MCF 10A (cell line): ENCODE measurements at regions of chr6 and their contacts with region 1.

Region 1: GRCh38 chr6:26312501-26313390 is 52.3 kb upstream of the BTN3A2 start:
- DNase-seq: peak; percentile 82
- H3K4me3 Mint-ChIP-seq: peak overlapping the region; percentile 79
- H3K27ac Mint-ChIP-seq: peak overlapping the region; percentile 74
- H3K4me1 Mint-ChIP-seq: peaks cover 26% of the 10 kb centered on the region
- H3K27me3 Mint-ChIP-seq: no peaks in the 10 kb centered on the region
- CTCF ChIP-seq: no peak

Region 2: DNA sequence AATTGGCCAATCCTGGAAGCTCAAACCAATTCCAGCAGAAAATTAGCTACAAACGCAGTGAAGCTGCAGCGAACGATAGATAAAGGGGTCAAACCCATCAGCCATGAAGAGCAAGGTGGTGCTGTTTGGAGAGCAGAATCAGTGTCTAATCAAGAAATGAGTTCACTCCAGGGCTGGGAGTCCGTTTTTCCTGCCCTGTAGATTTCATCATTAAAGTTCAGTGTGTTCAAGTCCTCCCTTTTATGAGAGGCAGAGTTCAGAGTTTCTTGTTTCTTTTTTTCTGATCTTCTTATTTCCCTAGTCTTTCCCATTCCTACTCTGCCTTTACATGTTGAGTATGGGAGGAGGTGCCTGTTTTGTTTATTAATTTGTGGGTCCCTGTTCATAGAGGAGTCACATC is 511.3 kb before region 1 on chr6:
- CTCF ChIA-PET with region 1: no interaction called
- POLR2A ChIA-PET with region 1: no interaction called
- intact Hi-C with region 1: no loop called
- DNase-seq: no peak
- H3K4me3 Mint-ChIP-seq: no peak overlapping the region
- H3K27ac Mint-ChIP-seq: no peak overlapping the region
- H3K4me1 Mint-ChIP-seq: no peaks in the 10 kb centered on the region
- H3K27me3 Mint-ChIP-seq: peaks cover 77% of the 10 kb centered on the region
- CTCF ChIP-seq: no peak

Region 3: DNA sequence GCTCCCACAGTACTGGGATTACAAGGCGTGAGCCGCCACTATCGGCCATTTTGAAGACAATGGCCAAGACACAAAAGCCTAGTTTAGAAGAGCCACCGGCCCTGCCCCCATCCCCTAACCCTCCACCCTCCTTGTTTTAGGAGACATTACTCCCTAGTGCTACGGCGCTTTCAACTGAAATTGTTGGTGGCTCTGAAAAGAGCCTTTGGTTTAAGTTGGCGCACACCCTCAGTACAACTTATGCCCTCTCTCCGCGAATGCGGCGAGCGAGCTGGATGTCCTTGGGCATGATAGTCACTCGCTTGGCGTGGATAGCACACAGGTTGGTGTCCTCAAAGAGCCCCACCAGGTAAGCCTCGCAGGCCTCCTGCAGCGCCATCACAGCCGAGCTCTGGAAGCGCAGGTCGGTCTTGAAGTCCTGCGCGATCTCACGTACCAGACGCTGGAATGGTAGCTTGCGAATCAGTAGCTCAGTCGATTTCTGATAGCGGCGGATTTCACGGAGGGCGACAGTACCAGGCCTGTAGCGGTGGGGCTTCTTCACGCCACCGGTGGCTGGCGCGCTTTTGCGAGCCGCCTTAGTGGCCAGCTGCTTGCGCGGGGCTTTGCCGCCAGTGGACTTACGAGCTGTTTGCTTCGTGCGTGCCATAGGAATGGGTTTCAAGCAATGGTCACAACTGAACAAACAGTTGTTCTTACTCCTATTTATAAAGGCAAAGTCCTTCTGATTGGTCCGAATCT is 62.6 kb before region 1 on chr6:
- CTCF ChIA-PET with region 1: no interaction called
- POLR2A ChIA-PET with region 1: interaction called, 5 read pairs
- intact Hi-C with region 1: loop called (anchors 1 kb)
- DNase-seq: peak; percentile 87
- H3K4me3 Mint-ChIP-seq: peak overlapping the region; percentile 94
- H3K27ac Mint-ChIP-seq: peak overlapping the region; percentile 63
- H3K4me1 Mint-ChIP-seq: peaks cover 7% of the 10 kb centered on the region
- H3K27me3 Mint-ChIP-seq: no peaks in the 10 kb centered on the region
- CTCF ChIP-seq: peak; percentile 42

Region 4: GRCh38 chr6:26295691-26296555 is 16.8 kb before region 1 on chr6:
- CTCF ChIA-PET with region 1: interaction called, 3 read pairs
- POLR2A ChIA-PET with region 1: interaction called, 31 read pairs
- intact Hi-C with region 1: no loop called
- DNase-seq: peak; percentile 87
- H3K4me3 Mint-ChIP-seq: peak overlapping the region; percentile 63
- H3K27ac Mint-ChIP-seq: peak overlapping the region; percentile 81
- H3K4me1 Mint-ChIP-seq: peaks cover 22% of the 10 kb centered on the region
- H3K27me3 Mint-ChIP-seq: no peaks in the 10 kb centered on the region
- CTCF ChIP-seq: no peak

Region 5: DNA sequence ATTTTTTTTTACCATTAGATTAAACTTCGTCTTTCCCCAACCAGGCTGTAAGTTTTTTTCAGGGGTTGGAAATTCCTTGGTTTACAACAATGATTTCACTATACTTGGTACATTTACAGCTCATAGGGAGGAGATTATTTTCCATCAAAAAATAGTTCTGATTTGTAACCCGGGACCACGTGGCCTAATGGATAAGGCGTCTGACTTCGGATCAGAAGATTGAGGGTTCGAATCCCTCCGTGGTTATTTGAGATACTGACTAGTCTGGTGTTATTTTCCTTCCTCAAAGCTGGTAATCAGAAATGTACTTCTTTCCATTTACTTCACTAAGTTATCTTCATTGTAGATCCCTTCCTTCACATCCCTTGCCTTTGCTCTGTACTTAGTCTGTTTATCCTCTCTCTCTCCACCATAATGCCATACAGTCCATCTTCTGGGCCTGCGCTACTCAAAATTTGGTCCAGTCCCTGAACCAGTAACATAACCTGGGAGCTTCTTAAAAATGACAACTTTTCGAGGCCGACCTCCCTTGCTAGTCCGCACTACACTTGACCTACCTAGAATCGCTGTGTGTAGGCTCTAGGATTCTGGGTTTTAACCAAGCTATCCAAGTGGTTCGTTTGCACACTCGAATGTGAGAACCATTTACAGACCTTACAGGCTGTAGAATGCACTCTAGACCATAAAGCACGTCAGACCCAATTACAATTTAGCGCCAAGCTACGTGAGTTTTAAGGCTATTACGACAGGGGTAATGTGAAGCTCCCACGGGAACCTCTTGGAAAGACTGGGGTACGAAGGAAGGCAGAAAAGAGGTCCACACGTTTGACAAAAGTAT is 10.1 kb after region 1 on chr6:
- CTCF ChIA-PET with region 1: interaction called, 8 read pairs
- POLR2A ChIA-PET with region 1: interaction called, 89 read pairs
- intact Hi-C with region 1: loop called (anchors 1 kb)
- DNase-seq: peak; percentile 85
- H3K4me3 Mint-ChIP-seq: peak overlapping the region; percentile 76
- H3K27ac Mint-ChIP-seq: peak overlapping the region; percentile 75
- H3K4me1 Mint-ChIP-seq: peaks cover 7% of the 10 kb centered on the region
- H3K27me3 Mint-ChIP-seq: no peaks in the 10 kb centered on the region
- CTCF ChIP-seq: no peak